ENCODE measurements at regions of chr16 and their contacts with region 1.

Region 1: GRCh38 chr16:71461686-71462648 is at the start of gene ZNF23:
- DNase-seq: peak; percentile 68
- H3K4me3 Mint-ChIP-seq: peak within 1 kb of the TSS; percentile 89
- H3K27ac Mint-ChIP-seq: peak within 1 kb of the TSS; percentile 82
- H3K4me1 Mint-ChIP-seq: peaks cover 5% of the 10 kb centered on the region
- H3K27me3 Mint-ChIP-seq: no peaks in the 10 kb centered on the region
- CTCF ChIP-seq: peak; percentile 4
- total RNA-seq, gene ZNF23: 12.6 and 13.7 TPM in 2 replicates

Region 2: GRCh38 chr16:71474864-71475263 is 12.9 kb after region 1 on chr16:
- CTCF ChIA-PET with region 1: interaction called, 7 read pairs
- POLR2A ChIA-PET with region 1: interaction called, 10 read pairs
- intact Hi-C with region 1: loop called (anchors 1 kb)
- DNase-seq: peak; percentile 39
- H3K4me3 Mint-ChIP-seq: no peak overlapping the region
- H3K27ac Mint-ChIP-seq: peak overlapping the region; percentile 2
- H3K4me1 Mint-ChIP-seq: peaks cover 8% of the 10 kb centered on the region
- H3K27me3 Mint-ChIP-seq: no peaks in the 10 kb centered on the region
- CTCF ChIP-seq: no peak

Region 3: DNA sequence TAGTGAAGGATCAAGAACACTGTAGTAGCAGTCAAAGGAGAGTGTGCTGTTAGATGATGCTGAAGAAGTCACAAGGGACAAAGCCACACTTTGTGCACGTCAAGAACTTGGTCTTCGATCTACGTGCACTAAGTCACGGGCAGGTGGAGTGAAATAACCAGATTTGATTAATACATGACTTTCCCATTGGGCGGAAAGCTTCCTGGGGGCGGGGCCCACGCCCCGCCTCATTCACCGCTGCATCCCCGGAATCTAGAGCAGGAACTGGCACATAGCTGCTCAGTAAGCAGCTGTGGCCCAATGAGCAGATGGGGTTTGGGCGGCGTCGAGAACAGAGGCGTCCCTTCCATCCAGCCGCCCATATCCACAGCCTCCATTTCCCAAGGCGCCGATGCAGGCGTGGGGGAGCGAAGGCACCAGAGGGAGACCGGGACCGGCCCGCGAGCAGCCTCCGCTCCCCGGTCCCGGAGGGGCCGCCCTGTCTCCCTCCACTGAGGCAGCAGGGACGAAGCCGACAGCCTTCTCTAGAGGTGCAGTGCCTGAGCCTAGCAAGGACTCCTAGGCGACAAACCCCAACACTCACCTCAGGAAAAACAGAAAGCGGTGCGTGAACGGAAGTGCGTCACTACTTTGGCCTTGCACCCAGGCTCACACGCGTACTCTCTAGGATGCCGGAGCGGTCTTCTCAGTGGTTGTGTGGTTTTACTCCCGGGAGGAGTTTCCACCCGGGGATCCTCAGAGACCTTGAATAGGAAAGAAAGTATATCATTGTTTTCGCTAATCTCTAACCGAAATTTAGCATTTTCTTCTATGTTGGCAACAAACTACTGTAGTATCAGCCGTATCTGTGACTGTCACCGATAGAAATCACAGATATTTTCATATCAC is 22.3 kb after region 1 on chr16:
- CTCF ChIA-PET with region 1: interaction called, 7 read pairs
- POLR2A ChIA-PET with region 1: interaction called, 94 read pairs
- intact Hi-C with region 1: loop called (anchors 1 kb)
- DNase-seq: peak; percentile 88
- H3K4me3 Mint-ChIP-seq: peak overlapping the region; percentile 79
- H3K27ac Mint-ChIP-seq: peak overlapping the region; percentile 72
- H3K4me1 Mint-ChIP-seq: peaks cover 8% of the 10 kb centered on the region
- H3K27me3 Mint-ChIP-seq: no peaks in the 10 kb centered on the region
- CTCF ChIP-seq: no peak

Region 4: GRCh38 chr16:71781741-71782140 is 319.8 kb after region 1 on chr16:
- CTCF ChIA-PET with region 1: no interaction called
- POLR2A ChIA-PET with region 1: no interaction called
- intact Hi-C with region 1: no loop called
- DNase-seq: no peak
- H3K4me3 Mint-ChIP-seq: no peak overlapping the region
- H3K27ac Mint-ChIP-seq: no peak overlapping the region
- H3K4me1 Mint-ChIP-seq: no peaks in the 10 kb centered on the region
- H3K27me3 Mint-ChIP-seq: no peaks in the 10 kb centered on the region
- CTCF ChIP-seq: no peak

Measured in MCF 10A (cell line).